Activated CD8-positive, alpha-beta T cell treated with anti-CD3 and anti-CD28 coated beads for 36 hours (primary cell): ENCODE measurements at regions of chr10 and their contacts with region 1.

Region 1: GRCh38 chr10:27658788-27659187 is 86.8 kb downstream of the MKX start:
- DNase-seq: no peak
- ATAC-seq: no peak
- H3K4me3 Mint-ChIP-seq: no peak overlapping the region
- H3K27ac Mint-ChIP-seq: no peak overlapping the region
- H3K4me1 Mint-ChIP-seq: no peaks in the 10 kb centered on the region
- H3K27me3 Mint-ChIP-seq: peaks cover 19% of the 10 kb centered on the region
- CTCF ChIP-seq: no peak

Region 2: GRCh38 chr10:27369880-27370279 is 288.9 kb before region 1 on chr10:
- CTCF ChIA-PET with region 1: no interaction called
- POLR2A ChIA-PET with region 1: no interaction called
- intact Hi-C with region 1: loop called (anchors 5 kb)
- DNase-seq: no peak
- ATAC-seq: no peak
- H3K4me3 Mint-ChIP-seq: no peak overlapping the region
- H3K27ac Mint-ChIP-seq: no peak overlapping the region
- H3K4me1 Mint-ChIP-seq: peaks cover 6% of the 10 kb centered on the region
- H3K27me3 Mint-ChIP-seq: peaks cover 3% of the 10 kb centered on the region
- CTCF ChIP-seq: peak; percentile 27

Region 3: GRCh38 chr10:27446091-27446918 is 212.5 kb before region 1 on chr10:
- CTCF ChIA-PET with region 1: interaction called, 12 read pairs
- POLR2A ChIA-PET with region 1: no interaction called
- intact Hi-C with region 1: loop called (anchors 5 kb)
- DNase-seq: no peak
- ATAC-seq: no peak
- H3K4me3 Mint-ChIP-seq: no peak overlapping the region
- H3K27ac Mint-ChIP-seq: no peak overlapping the region
- H3K4me1 Mint-ChIP-seq: peaks cover 6% of the 10 kb centered on the region
- H3K27me3 Mint-ChIP-seq: no peaks in the 10 kb centered on the region
- CTCF ChIP-seq: peak; percentile 50

Region 4: GRCh38 chr10:27513451-27514191 is 145.2 kb before region 1 on chr10:
- CTCF ChIA-PET with region 1: no interaction called
- POLR2A ChIA-PET with region 1: no interaction called
- intact Hi-C with region 1: no loop called
- DNase-seq: no peak
- ATAC-seq: peak; percentile 90
- H3K4me3 Mint-ChIP-seq: peak overlapping the region; percentile 10
- H3K27ac Mint-ChIP-seq: peak overlapping the region; percentile 89
- H3K4me1 Mint-ChIP-seq: peaks cover 70% of the 10 kb centered on the region
- H3K27me3 Mint-ChIP-seq: no peaks in the 10 kb centered on the region
- CTCF ChIP-seq: no peak

Region 5: GRCh38 chr10:27558612-27559020 is 100.2 kb before region 1 on chr10:
- CTCF ChIA-PET with region 1: interaction called, 16 read pairs
- POLR2A ChIA-PET with region 1: no interaction called
- intact Hi-C with region 1: loop called (anchors 5 kb)
- DNase-seq: peak; percentile 38
- ATAC-seq: no peak
- H3K4me3 Mint-ChIP-seq: no peak overlapping the region
- H3K27ac Mint-ChIP-seq: no peak overlapping the region
- H3K4me1 Mint-ChIP-seq: no peaks in the 10 kb centered on the region
- H3K27me3 Mint-ChIP-seq: no peaks in the 10 kb centered on the region
- CTCF ChIP-seq: peak; percentile 70

Region 6: DNA sequence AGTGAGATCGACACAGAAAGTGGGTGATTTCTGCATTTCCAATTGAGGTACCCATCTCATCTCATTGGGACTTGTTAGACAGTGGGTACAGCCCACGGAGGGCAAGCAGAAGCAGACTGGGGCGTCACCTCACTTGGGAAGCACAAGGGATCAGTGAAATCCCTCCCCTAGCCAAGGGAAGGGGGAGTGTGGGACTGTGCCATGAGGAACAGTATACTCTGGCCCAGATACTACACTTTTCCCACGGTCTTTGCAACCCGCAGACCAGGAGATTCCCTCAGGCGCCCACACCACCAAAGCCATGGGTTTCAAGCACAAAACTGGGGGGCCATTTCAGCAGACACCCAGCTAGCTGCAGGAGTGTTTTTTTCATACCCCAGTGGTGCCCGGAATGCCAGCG is 240.3 kb after region 1 on chr10:
- CTCF ChIA-PET with region 1: no interaction called
- POLR2A ChIA-PET with region 1: no interaction called
- intact Hi-C with region 1: no loop called
- DNase-seq: no peak
- ATAC-seq: no peak
- H3K4me3 Mint-ChIP-seq: no peak overlapping the region
- H3K27ac Mint-ChIP-seq: no peak overlapping the region
- H3K4me1 Mint-ChIP-seq: peaks cover 18% of the 10 kb centered on the region
- H3K27me3 Mint-ChIP-seq: no peaks in the 10 kb centered on the region
- CTCF ChIP-seq: no peak